GM10248 (cell line): ENCODE measurements at regions of chr3 and their contacts with region 1.

Region 1: GRCh38 chr3:134186391-134186790 is 64.3 kb downstream of the RYK start:
- DNase-seq: no peak
- CTCF ChIP-seq: no peak

Region 2: DNA sequence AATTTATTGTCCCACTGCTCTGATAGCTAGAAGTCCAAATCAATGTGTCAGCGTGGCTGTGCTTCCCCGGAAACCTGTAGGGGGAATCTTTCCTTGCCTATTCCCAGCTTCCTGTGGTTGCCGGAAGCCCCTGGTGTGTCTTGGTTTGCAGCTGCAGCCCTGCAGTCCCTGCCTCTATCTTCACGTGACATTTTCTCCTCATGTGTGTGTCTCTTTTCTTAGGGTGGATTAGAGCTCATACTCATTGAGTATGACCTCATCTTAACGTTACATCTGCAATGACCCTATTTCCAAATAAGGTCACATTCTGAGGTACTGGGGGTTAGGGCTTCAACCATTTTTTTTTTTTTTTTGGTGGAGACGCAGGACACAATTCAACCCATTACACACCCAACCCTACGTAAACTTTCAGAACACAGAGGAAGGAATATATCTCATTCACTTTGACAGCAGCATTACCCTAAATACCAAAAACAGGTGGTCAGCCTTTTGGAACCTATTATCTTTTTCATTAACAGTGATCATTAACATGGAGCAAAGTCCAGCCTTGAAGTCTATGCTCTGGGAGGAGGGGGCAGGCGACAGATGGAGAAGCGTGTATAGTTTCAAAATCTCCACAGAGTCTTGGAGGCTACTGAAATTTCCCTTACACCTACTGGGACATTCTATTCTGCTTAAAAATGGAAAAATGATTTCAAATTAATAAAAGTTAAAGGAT is 24.3 kb before region 1 on chr3:
- CTCF ChIA-PET with region 1: interaction called, 10 read pairs
- POLR2A ChIA-PET with region 1: no interaction called
- DNase-seq: no peak
- CTCF ChIP-seq: no peak